CD14-positive monocyte (primary cell): ENCODE measurements at regions of chr19 and their contacts with region 1.

Region 1: DNA sequence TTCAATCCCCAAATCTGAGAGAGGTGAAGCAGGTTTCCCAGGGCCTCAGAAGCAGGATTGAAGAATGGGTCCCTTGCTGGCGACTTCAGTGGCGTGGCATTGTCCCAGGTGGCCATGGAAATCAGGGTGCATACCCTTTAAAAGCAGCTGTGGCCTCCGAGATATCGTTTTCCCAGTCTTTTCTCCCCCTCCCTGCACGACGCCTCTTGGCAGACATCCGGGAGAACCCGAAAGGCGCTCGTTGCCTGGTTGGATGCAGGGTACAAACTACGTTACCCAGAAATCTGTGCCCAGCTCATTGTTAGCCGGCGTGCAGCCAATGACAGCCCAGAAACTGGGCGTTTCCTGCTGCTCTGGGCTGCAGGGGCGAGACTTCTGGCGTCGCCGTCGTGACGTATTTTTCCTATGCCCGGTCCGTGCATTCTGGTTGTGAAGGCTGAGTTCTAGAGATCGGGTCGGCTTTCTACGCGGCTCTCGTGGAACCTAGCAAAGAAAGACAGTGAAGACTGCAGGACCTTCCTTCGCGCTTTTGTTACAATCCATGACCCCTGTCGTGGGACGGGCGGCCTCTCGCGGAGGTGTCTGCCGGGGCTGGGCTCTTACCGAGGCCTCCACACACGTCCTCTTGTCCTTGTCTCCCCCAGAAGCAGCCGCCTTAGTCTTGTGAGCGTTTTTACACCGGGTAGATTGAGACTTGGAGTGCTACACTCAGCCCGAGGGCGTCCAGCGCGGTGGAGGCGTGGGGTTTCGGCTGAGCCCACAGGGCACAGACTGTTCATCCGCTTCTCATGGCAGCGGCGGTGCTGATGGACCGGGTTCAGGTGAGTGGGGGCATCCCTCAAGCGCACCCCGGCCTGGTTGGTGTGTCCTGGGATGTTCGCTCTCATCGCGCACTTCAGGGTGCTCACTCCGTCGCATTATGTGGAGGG is at the start of gene ZNF304:
- DNase-seq: peak; percentile 84 to 88 (median 88)
- H3K4me3 ChIP-seq: peak within 1 kb of the TSS; percentile 76 to 96 (median 81)
- H3K4me3 Mint-ChIP-seq: peak within 1 kb of the TSS; percentile 95
- H3K27ac ChIP-seq: peak within 1 kb of the TSS; percentile 46 to 96
- H3K27ac Mint-ChIP-seq: peak within 1 kb of the TSS; percentile 85 to 94 (median 90)
- H3K4me1 ChIP-seq: peaks cover 17 to 20% of the 10 kb centered on the region in 2 donors
- H3K4me1 Mint-ChIP-seq: peaks cover 29% of the 10 kb centered on the region
- H3K27me3 ChIP-seq: no peaks in the 10 kb centered on the region
- H3K27me3 Mint-ChIP-seq: peaks cover 0 to 15% (median 2%) of the 10 kb centered on the region in 3 donors
- CTCF ChIP-seq: no peak
- polyA plus RNA-seq, gene ZNF304: 0.96 to 2.9 (median 1.0) TPM

Region 2: DNA sequence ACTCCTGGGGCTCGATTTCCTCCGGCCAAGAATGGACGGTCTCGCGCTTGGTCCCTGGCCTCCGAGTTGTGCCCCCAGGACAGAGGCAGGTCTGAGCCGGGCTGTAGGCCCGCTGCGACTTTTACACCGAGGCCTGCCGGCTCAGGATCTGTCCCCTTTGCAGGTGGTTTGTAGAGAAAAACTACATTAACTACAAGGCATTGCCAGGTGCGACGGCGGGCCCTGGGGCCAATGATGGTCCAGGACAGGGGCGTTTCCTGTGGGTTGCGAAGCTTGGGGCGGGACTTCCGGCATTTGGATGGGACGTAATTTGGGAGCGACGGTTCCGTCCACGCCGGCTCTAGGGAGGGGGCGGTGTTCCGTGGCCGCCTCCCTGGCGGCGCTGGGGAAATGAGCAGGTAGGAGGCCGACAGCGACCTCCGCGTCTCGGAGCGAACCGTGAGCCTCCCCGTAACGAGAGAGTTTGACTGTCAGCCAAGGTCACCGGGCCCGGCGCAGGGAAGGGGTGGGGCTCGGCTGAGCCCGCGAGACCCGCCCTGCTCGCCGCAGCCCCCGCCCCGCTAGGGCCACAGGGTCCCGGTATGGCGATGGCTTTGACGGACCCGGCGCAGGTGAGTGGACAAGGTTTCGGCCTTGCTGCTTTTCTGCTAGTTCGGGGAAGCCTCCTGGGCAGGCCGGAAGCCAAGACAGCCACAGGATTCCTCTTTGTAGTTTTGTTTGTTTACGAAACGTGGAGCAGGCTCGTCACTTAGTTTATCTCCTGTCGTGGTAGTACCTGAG is 110.6 kb before region 1 on chr19 and contains the start of gene ZNF805:
- intact Hi-C with region 1: loop called in 1 of 2 experiments (anchors 10 kb)
- DNase-seq: peak; percentile 84 to 90 (median 86)
- H3K4me3 ChIP-seq: peak within 1 kb of the TSS; percentile 78 to 94 (median 81)
- H3K4me3 Mint-ChIP-seq: peak within 1 kb of the TSS; percentile 88 to 94
- H3K27ac ChIP-seq: peak within 1 kb of the TSS; percentile 72 to 92
- H3K27ac Mint-ChIP-seq: peak within 1 kb of the TSS; percentile 86 to 96 (median 93)
- H3K4me1 ChIP-seq: peaks cover 17 to 23% of the 10 kb centered on the region in 2 donors
- H3K4me1 Mint-ChIP-seq: peaks cover 21% of the 10 kb centered on the region
- H3K27me3 ChIP-seq: no peaks in the 10 kb centered on the region
- H3K27me3 Mint-ChIP-seq: peaks cover 0 to 2% (median 2%) of the 10 kb centered on the region in 3 donors
- CTCF ChIP-seq: no peak
- polyA plus RNA-seq, gene ZNF805: 1.3 to 3.4 (median 3.3) TPM

Region 3: DNA sequence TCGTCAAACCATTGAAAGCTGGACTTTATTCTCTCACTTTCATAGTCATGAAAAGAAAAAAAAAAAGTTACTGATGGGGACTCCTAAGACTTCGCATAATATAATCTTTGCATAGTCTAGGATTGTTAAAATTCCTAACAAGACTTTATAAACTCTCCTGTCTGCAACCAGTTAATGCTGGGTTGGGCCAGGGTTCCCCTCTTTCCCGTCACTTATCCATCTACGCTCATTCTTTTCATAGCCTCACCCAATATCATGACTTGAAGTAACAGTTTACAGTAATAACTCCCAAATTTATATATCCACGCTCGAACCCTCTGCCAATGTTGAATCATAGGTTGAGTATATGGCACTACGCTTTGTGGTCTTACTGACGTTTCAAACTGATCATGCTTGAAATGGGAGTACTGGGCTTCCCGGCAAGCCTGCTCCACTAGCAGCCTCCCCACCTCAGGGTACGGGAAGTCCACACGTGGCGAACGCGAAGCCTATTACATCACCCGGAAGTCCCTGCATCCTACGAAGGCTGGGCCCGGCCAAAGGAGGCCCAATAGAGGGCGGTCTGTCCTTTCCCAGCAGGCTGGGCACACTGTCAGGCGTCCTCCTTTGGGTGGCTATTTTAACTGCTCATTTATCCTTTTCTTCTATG is 71.6 kb before region 1 on chr19:
- intact Hi-C with region 1: loop called in 1 of 2 experiments (anchors 2 kb)
- DNase-seq: peak; percentile 85 to 94 (median 88)
- H3K4me3 ChIP-seq: peak overlapping the region; percentile 80 to 87 (median 85)
- H3K4me3 Mint-ChIP-seq: no peak overlapping the region
- H3K27ac ChIP-seq: peak overlapping the region; percentile 95
- H3K27ac Mint-ChIP-seq: no peak overlapping the region
- H3K4me1 ChIP-seq: peaks cover 18 to 26% of the 10 kb centered on the region in 2 donors
- H3K4me1 Mint-ChIP-seq: peaks cover 18% of the 10 kb centered on the region
- H3K27me3 ChIP-seq: no peaks in the 10 kb centered on the region
- H3K27me3 Mint-ChIP-seq: peaks cover 0 to 3% (median 0%) of the 10 kb centered on the region in 3 donors
- CTCF ChIP-seq: no peak

Region 4: GRCh38 chr19:57389730-57390598 is 38.8 kb after region 1 on chr19 and contains the start of gene ZNF548:
- intact Hi-C with region 1: loop called in 1 of 2 experiments (anchors 1 kb)
- DNase-seq: peak; percentile 98 to 99 (median 98)
- H3K4me3 ChIP-seq: peak within 1 kb of the TSS; percentile 68 to 92 (median 82)
- H3K4me3 Mint-ChIP-seq: peak within 1 kb of the TSS; percentile 91 to 98
- H3K27ac ChIP-seq: peak within 1 kb of the TSS; percentile 82 to 90
- H3K27ac Mint-ChIP-seq: peak within 1 kb of the TSS; percentile 87 to 95 (median 91)
- H3K4me1 ChIP-seq: peaks cover 13 to 18% of the 10 kb centered on the region in 2 donors
- H3K4me1 Mint-ChIP-seq: peaks cover 13% of the 10 kb centered on the region
- H3K27me3 ChIP-seq: no peaks in the 10 kb centered on the region
- H3K27me3 Mint-ChIP-seq: peaks cover 0 to 6% (median 2%) of the 10 kb centered on the region in 3 donors
- CTCF ChIP-seq: no peak
- polyA plus RNA-seq, gene ZNF548: 4.6 to 20.7 (median 6.0) TPM

Region 5: DNA sequence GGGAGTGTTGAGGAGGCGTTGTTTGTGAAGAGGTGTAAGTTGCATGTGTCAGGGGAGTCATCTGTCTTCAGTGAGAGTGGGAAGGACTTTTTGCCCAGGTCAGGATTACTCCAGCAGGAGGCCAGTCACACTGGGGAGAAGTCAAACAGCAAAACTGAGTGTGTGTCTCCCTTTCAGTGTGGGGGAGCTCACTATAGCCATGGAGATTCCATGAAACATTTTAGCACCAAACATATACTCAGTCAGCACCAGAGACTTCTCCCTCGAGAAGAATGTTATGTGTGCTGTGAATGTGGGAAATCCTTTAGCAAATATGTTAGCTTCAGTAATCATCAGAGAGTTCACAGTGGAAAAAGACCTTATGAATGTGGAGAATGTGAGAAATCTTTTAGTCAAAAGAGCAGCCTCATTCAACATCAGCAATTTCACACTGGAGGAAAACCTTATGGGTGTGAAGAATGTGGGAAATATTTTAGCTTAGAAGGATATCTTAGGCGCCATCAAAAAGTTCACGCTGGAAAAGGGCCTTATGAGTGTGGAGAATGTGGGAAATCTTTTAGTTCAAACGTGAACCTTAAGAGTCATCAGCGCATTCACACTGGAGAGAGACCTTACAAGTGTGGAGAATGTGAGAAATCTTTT is 490.1 kb after region 1 on chr19:
- intact Hi-C with region 1: no loop called
- DNase-seq: no peak
- H3K4me3 ChIP-seq: no peak overlapping the region
- H3K4me3 Mint-ChIP-seq: no peak overlapping the region
- H3K27ac ChIP-seq: no peak overlapping the region
- H3K27ac Mint-ChIP-seq: no peak overlapping the region
- H3K4me1 ChIP-seq: no peaks in the 10 kb centered on the region
- H3K4me1 Mint-ChIP-seq: no peaks in the 10 kb centered on the region
- H3K27me3 ChIP-seq: no peaks in the 10 kb centered on the region
- H3K27me3 Mint-ChIP-seq: peaks cover 0 to 2% (median 0%) of the 10 kb centered on the region in 3 donors
- CTCF ChIP-seq: no peak